ENCODE measurements at regions of chr1 and their contacts with region 1.

Region 1: GRCh38 chr1:160193091-160193819 is 2.9 kb downstream of the CASQ1 start:
- DNase-seq: peak; percentile 86 to 92
- H3K4me3 ChIP-seq: no peak overlapping the region
- H3K27ac ChIP-seq: no peak overlapping the region
- H3K4me1 ChIP-seq: peaks cover 0 to 27% (median 24%) of the 10 kb centered on the region in 4 donors
- H3K27me3 ChIP-seq: no peaks in the 10 kb centered on the region
- CTCF ChIP-seq: peak; percentile 90 to 98

Region 2: GRCh38 chr1:159900086-159900680 is 293.1 kb before region 1 on chr1 and contains the start of gene CFAP45:
- intact Hi-C with region 1: no loop called
- DNase-seq: peak; percentile 82 to 95
- H3K4me3 ChIP-seq: peak within 1 kb of the TSS in 1 of 2 donors; percentile 27
- H3K27ac ChIP-seq: peak within 1 kb of the TSS; percentile 67 to 71
- H3K4me1 ChIP-seq: peaks cover 0 to 22% (median 19%) of the 10 kb centered on the region in 4 donors
- H3K27me3 ChIP-seq: no peaks in the 10 kb centered on the region
- CTCF ChIP-seq: no peak

Region 3: GRCh38 chr1:160219062-160219929 is 26.0 kb after region 1 on chr1:
- intact Hi-C with region 1: loop called (anchors 2 kb)
- DNase-seq: peak; percentile 55 to 78
- H3K4me3 ChIP-seq: no peak overlapping the region
- H3K27ac ChIP-seq: peak overlapping the region; percentile 61 to 81
- H3K4me1 ChIP-seq: peaks cover 0 to 34% (median 25%) of the 10 kb centered on the region in 4 donors
- H3K27me3 ChIP-seq: no peaks in the 10 kb centered on the region
- CTCF ChIP-seq: peak; percentile 71 to 76

Region 4: DNA sequence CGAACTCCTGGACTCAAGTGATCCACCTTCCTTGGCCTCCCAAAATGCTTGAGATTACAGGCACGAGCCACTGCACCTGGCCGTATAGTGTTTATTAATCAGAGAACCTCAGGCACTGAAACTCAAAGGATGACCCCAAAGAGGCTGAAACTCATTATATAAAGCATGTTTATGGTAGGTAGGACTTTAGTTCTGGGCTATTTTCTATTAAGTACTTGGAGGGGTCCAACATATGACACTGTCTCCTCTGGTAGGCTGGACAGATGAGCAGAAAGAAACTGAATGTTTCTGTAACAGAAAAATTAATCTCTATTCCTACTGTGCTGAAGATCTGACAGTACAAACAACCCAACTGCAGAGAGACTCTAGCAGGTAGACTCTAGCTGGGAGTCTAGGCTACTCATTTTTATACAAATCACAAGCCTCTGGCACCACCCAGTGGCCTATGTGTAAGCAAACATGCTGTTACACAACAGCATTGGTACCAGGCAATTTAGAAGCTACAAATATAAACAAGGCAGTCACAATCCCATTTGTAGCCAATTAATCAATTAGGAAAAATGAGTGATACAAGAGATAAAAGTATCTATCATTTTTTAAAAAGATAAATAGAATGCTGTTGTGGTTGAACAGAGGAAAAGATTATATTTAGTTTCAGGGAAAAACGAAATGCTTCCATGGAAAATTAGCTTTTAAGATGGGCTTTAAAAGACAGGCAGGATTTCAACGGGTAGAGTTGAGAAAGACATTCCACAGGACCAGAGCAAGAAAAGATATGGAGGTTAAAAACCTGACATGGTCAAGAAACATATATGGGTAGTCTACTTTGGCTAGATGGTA is 58.7 kb after region 1 on chr1:
- intact Hi-C with region 1: loop called (anchors 2 kb)
- DNase-seq: peak; percentile 67 to 82
- H3K4me3 ChIP-seq: no peak overlapping the region
- H3K27ac ChIP-seq: peak overlapping the region; percentile 26 to 49
- H3K4me1 ChIP-seq: peaks cover 0 to 51% (median 11%) of the 10 kb centered on the region in 4 donors
- H3K27me3 ChIP-seq: no peaks in the 10 kb centered on the region
- CTCF ChIP-seq: peak; percentile 64 to 81

Region 5: DNA sequence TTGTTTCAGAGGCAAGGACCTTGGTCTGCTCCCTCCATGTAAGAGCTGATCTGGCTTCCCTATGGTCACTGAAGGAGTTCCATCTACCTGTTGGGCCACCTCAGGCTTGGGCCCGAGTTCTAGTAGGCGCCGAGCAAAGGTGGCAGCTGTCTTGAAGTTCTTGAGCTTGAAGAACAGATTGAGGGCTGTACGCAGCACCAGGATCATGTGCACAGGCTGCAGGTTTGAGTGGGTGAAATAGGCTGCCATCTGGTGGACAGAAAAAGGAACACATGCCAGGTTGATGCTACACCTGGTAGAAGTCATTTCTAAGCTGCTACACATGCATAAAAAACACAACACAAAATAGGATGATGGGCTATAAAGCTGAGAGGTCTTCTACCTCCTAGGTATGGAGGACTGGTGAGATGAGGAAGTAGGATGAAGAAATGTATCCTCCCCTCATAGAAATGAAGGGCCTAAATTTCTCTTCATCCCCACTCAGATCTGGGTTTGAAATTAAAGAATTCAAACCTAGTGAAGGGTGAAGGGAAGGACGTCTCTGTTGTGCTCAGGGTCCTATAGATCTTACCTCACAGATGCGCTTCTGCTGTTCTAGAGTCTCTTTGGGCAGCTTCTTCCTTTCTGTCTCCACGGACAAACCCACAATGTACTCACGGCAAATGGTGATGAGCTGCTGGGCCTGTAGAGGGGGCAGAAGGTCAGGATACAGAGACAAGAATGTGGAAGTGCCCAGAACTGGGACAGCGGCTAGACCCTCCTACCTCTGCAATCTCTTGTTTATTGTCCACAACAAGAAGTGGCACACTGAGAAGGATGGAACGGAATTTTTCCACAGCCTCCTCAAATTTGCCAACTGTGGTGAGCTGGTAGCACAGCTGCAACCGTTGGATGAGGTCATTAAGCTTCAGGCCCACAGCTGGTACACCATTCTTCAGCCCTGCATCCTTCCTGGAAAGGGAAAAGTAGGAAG is 98.3 kb after region 1 on chr1:
- intact Hi-C with region 1: loop called (anchors 2 kb)
- DNase-seq: peak; percentile 53 to 72
- H3K4me3 ChIP-seq: no peak overlapping the region
- H3K27ac ChIP-seq: no peak overlapping the region
- H3K4me1 ChIP-seq: no peaks in the 10 kb centered on the region
- H3K27me3 ChIP-seq: no peaks in the 10 kb centered on the region
- CTCF ChIP-seq: peak; percentile 81 to 82

Measured in tibial artery (tissue), 4 donors.